ENCODE measurements at regions of chr3 and their contacts with region 1.

Region 1: GRCh38 chr3:4633078-4634004 is 140.2 kb downstream of the ITPR1 start:
- DNase-seq: peak in 2 of 5 donors; percentile 32 to 36
- H3K4me3 ChIP-seq: no peak overlapping the region
- H3K4me3 Mint-ChIP-seq: no peak overlapping the region
- H3K27ac ChIP-seq: no peak overlapping the region
- H3K27ac Mint-ChIP-seq: peak overlapping the region in 5 of 8 donors; percentile 39 to 67 (median 55)
- H3K4me1 ChIP-seq: no peaks in the 10 kb centered on the region
- H3K4me1 Mint-ChIP-seq: peaks cover 5 to 7% (median 7%) of the 10 kb centered on the region in 3 donors
- H3K27me3 ChIP-seq: no peaks in the 10 kb centered on the region
- H3K27me3 Mint-ChIP-seq: no peaks in the 10 kb centered on the region

Region 2: GRCh38 chr3:4350789-4351163 is 282.6 kb before region 1 on chr3:
- CTCF ChIA-PET with region 1: interaction called, 64 read pairs
- POLR2A ChIA-PET with region 1: interaction called, 6 read pairs
- DNase-seq: peak; percentile 26 to 75 (median 60)
- H3K4me3 ChIP-seq: no peak overlapping the region
- H3K4me3 Mint-ChIP-seq: peak overlapping the region; percentile 14 to 85 (median 72)
- H3K27ac ChIP-seq: peak overlapping the region; percentile 64
- H3K27ac Mint-ChIP-seq: peak overlapping the region in 5 of 8 donors; percentile 5 to 84 (median 20)
- H3K4me1 ChIP-seq: no peaks in the 10 kb centered on the region
- H3K4me1 Mint-ChIP-seq: peaks cover 12 to 21% (median 17%) of the 10 kb centered on the region in 3 donors
- H3K27me3 ChIP-seq: no peaks in the 10 kb centered on the region
- H3K27me3 Mint-ChIP-seq: no peaks in the 10 kb centered on the region

Region 3: GRCh38 chr3:4376499-4376898 is 256.8 kb before region 1 on chr3:
- CTCF ChIA-PET with region 1: no interaction called
- POLR2A ChIA-PET with region 1: no interaction called
- DNase-seq: no peak
- H3K4me3 ChIP-seq: no peak overlapping the region
- H3K4me3 Mint-ChIP-seq: no peak overlapping the region
- H3K27ac ChIP-seq: no peak overlapping the region
- H3K27ac Mint-ChIP-seq: peak overlapping the region in 1 of 8 donors; percentile 64
- H3K4me1 ChIP-seq: no peaks in the 10 kb centered on the region
- H3K4me1 Mint-ChIP-seq: no peaks in the 10 kb centered on the region
- H3K27me3 ChIP-seq: no peaks in the 10 kb centered on the region
- H3K27me3 Mint-ChIP-seq: no peaks in the 10 kb centered on the region

Region 4: GRCh38 chr3:4493014-4493940 is 140.1 kb before region 1 on chr3 and contains the start of gene ITPR1:
- CTCF ChIA-PET with region 1: interaction called, 13 read pairs
- POLR2A ChIA-PET with region 1: no interaction called
- DNase-seq: peak; percentile 95 to 100 (median 97)
- H3K4me3 ChIP-seq: peak within 1 kb of the TSS; percentile 82
- H3K4me3 Mint-ChIP-seq: peak within 1 kb of the TSS; percentile 90 to 98 (median 94)
- H3K27ac ChIP-seq: peak within 1 kb of the TSS; percentile 79
- H3K27ac Mint-ChIP-seq: peak within 1 kb of the TSS; percentile 71 to 99 (median 92)
- H3K4me1 ChIP-seq: peaks cover 26% of the 10 kb centered on the region
- H3K4me1 Mint-ChIP-seq: peaks cover 40 to 60% (median 58%) of the 10 kb centered on the region in 3 donors
- H3K27me3 ChIP-seq: no peaks in the 10 kb centered on the region
- H3K27me3 Mint-ChIP-seq: no peaks in the 10 kb centered on the region
- total RNA-seq, gene ITPR1: 82.6 to 85.8 TPM

Region 5: GRCh38 chr3:4517643-4518311 is 115.6 kb before region 1 on chr3:
- CTCF ChIA-PET with region 1: interaction called, 32 read pairs
- POLR2A ChIA-PET with region 1: interaction called, 3 read pairs
- DNase-seq: no peak
- H3K4me3 ChIP-seq: no peak overlapping the region
- H3K4me3 Mint-ChIP-seq: peak overlapping the region in 1 of 7 donors; percentile 69
- H3K27ac ChIP-seq: peak overlapping the region; percentile 3
- H3K27ac Mint-ChIP-seq: peak overlapping the region; percentile 62 to 94 (median 90)
- H3K4me1 ChIP-seq: peaks cover 28% of the 10 kb centered on the region
- H3K4me1 Mint-ChIP-seq: peaks cover 30 to 50% (median 44%) of the 10 kb centered on the region in 3 donors
- H3K27me3 ChIP-seq: no peaks in the 10 kb centered on the region
- H3K27me3 Mint-ChIP-seq: no peaks in the 10 kb centered on the region

Region 6: GRCh38 chr3:4604693-4605092 is 28.6 kb before region 1 on chr3:
- CTCF ChIA-PET with region 1: interaction called, 11 read pairs
- POLR2A ChIA-PET with region 1: no interaction called
- DNase-seq: no peak
- H3K4me3 ChIP-seq: no peak overlapping the region
- H3K4me3 Mint-ChIP-seq: no peak overlapping the region
- H3K27ac ChIP-seq: no peak overlapping the region
- H3K27ac Mint-ChIP-seq: no peak overlapping the region
- H3K4me1 ChIP-seq: no peaks in the 10 kb centered on the region
- H3K4me1 Mint-ChIP-seq: peaks cover 15 to 37% (median 27%) of the 10 kb centered on the region in 3 donors
- H3K27me3 ChIP-seq: no peaks in the 10 kb centered on the region
- H3K27me3 Mint-ChIP-seq: no peaks in the 10 kb centered on the region

Measured in CD8-positive, alpha-beta memory T cell (primary cell).